HepG2 (cell line): ENCODE measurements at regions of chr20 and their contacts with region 1.

Region 1: DNA sequence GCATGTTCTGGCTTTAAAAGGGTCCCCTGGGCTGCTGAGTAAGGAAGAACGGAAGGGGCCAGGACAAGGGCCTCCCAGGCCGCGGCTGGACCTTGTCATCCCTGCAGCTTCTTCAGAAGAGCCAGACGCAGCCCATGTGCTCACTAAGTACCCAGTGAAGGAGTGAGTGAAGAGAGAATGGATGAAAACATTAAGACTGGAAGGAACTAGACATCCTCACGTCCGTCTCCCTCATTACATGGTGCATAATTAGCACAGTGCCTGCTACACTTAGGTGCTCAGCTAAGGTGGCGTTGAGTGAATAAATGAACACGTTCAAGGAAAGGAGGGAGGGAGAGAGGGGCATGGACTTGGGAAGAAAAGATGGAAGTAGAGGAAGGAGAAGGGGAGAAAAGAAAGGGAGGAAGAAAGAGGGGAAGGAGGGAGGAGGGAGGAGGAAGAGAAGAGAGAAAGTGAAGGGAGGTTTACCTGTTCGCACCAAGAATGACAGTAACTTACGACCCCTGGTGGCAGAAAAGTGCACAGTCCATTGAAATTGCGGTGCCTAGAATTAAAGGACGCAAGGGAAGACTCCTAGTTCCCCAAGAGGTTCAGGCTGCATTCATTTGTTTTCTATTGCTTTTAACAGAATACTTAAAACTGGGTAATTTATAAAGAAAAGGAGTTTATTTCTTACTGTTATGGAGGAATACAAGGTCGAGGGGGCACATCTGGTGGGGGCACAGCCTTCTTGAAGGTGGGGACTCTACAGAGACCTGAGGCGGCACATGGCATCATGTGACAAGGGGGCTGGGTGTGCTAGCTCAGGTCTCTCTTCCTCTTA is 8.0 kb downstream of the TP53RK start:
- DNase-seq: peak; percentile 82
- ATAC-seq: peak; percentile 59
- H3K4me3 ChIP-seq: no peak overlapping the region
- H3K27ac ChIP-seq: no peak overlapping the region
- H3K4me1 ChIP-seq: peaks cover 88% of the 10 kb centered on the region
- H3K27me3 ChIP-seq: no peaks in the 10 kb centered on the region
- CTCF ChIP-seq: peak; percentile 97
- EP300 ChIP-seq: no peak
- POLR2A ChIP-seq: no peak
- RAD21 ChIP-seq: peak; percentile 98

Region 2: DNA sequence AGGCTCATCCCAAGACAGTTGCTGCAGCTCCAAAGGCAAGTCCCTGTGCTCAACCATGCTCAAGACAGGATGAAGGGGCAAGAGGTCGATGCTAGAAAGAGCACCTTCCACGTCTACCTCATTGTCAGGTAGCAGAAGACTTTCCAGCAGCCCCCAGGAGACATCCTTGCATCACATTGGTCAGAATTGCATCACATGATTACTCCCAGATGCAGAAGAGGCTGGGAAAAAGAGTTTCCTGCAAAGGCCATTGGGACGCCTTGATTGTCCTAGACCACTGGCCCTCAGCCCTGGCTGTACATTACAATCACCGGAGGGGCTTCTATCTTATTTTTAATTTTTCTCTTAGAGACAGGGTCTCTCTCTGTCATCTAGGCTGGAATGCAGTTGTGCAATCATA is 150.6 kb before region 1 on chr20:
- CTCF ChIA-PET with region 1: no interaction called
- POLR2A ChIA-PET with region 1: no interaction called
- in situ Hi-C with region 1: no loop called
- intact Hi-C with region 1: no loop called
- DNase-seq: no peak
- ATAC-seq: no peak
- H3K4me3 ChIP-seq: no peak overlapping the region
- H3K27ac ChIP-seq: no peak overlapping the region
- H3K4me1 ChIP-seq: peaks cover 10% of the 10 kb centered on the region; the same call in 1 of the 2 replicates
- H3K27me3 ChIP-seq: peaks cover 2% of the 10 kb centered on the region in 2 experiments; a peak in 2 of 5 replicates
- CTCF ChIP-seq: no peak
- EP300 ChIP-seq: no peak
- POLR2A ChIP-seq: no peak
- RAD21 ChIP-seq: no peak

Region 3: GRCh38 chr20:46545077-46545826 is 136.0 kb before region 1 on chr20:
- CTCF ChIA-PET with region 1: interaction called, 14 read pairs
- POLR2A ChIA-PET with region 1: no interaction called
- in situ Hi-C with region 1: no loop called
- intact Hi-C with region 1: no loop called
- DNase-seq: no peak
- ATAC-seq: peak; percentile 58
- H3K4me3 ChIP-seq: no peak overlapping the region
- H3K27ac ChIP-seq: no peak overlapping the region
- H3K4me1 ChIP-seq: peaks cover 31% of the 10 kb centered on the region
- H3K27me3 ChIP-seq: peaks cover 3 to 16% of the 10 kb centered on the region in 2 experiments; a peak in 3 of 5 replicates
- CTCF ChIP-seq: peak; percentile 29
- EP300 ChIP-seq: no peak
- POLR2A ChIP-seq: no peak
- RAD21 ChIP-seq: no peak

Region 4: DNA sequence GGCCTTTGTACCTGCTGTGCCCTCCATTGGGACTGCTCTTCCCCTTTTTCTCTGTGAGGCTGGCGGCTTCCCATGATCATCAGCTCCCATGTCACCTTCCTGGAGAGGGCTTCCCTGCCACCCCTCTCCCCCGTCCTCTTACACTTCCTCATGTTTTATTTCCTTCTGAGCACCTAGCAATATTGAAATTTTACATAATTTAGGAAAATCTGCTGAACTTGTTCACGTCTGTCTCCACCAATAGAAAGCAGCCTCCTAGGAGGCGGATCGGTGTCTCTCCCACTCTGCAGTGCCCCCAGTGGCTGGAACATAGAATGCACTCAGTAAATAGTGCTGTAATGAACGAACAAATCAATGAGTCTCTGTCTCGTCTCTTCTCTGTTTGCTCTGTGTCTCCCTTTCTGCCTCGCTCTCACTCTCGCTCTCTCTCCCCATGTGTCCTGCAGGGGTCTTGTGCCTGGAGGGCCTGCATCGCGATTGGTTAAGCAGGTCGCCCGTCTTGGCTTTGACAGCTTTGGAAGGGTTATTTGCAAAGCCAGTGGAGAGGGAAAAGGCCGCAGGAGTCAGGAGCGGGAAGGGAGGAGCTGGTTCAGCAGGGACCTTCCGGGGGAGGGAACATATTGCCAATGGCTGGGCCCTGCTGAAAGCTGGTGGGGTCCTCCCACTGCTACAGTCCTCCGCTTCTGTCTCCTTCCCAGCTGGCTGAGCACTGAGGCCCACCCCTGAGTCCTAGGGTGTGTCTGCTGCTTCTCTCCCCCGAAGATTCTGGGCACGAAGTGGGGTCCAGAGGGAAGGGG is 118.7 kb before region 1 on chr20:
- CTCF ChIA-PET with region 1: interaction called, 19 read pairs
- POLR2A ChIA-PET with region 1: interaction called, 4 read pairs
- in situ Hi-C with region 1: loop called (anchors 5 kb)
- intact Hi-C with region 1: loop called (anchors 1 kb)
- DNase-seq: peak; percentile 87
- ATAC-seq: peak; percentile 74
- H3K4me3 ChIP-seq: peak overlapping the region; percentile 24 to 58 (median 29); a peak in 5 of 6 replicates
- H3K27ac ChIP-seq: peak overlapping the region; percentile 55
- H3K4me1 ChIP-seq: peaks cover 72% of the 10 kb centered on the region
- H3K27me3 ChIP-seq: no peaks in the 10 kb centered on the region
- CTCF ChIP-seq: peak; percentile 93
- EP300 ChIP-seq: peak; percentile 41 to 46; a peak in 2 of 4 replicates
- POLR2A ChIP-seq: no peak; a peak in 1 of 4 replicates
- RAD21 ChIP-seq: peak; percentile 65; the same call in 1 of the 2 replicates

Region 5: DNA sequence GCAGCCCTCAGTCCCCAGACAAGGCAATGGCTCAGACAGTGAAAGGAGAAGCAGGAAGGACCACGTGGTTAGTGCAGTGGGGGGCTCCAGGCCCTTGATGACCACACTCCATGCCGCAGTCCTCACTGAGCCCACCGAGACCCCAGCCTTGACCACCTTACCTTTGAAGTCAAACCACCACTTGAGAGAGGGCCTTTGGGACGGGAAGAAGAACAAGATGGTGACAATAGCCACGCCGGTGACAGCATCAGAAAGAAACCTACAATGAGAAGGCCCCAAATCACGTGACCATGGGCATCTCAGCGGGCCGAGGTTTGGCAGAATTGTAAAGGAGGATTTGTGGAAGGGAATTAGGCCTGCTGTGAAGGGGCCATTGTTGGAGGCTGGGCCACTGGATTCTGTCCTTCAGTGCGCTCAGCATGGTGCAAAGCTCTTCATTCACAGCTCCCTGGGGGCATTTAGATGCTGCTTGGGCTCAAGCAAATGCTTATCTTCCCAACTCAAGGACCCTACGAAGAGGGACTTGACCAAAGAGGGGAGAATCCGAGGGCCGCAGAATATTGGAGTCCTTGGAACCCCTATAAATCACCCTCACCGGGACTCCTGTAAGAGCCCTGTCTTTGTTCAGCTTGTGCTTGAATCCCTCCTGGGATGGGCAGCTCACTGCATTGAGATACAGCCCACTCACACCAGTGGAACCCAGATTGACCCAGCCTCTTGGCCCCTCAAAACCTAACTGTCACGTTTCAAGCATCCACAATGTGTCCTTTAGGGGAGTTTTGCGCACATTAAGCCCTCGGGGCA is 97.6 kb before region 1 on chr20:
- CTCF ChIA-PET with region 1: interaction called, 11 read pairs
- POLR2A ChIA-PET with region 1: no interaction called
- in situ Hi-C with region 1: no loop called
- intact Hi-C with region 1: no loop called
- DNase-seq: no peak
- ATAC-seq: no peak
- H3K4me3 ChIP-seq: no peak overlapping the region
- H3K27ac ChIP-seq: peak overlapping the region; percentile 16
- H3K4me1 ChIP-seq: peaks cover 39% of the 10 kb centered on the region
- H3K27me3 ChIP-seq: no peaks in the 10 kb centered on the region
- CTCF ChIP-seq: no peak
- EP300 ChIP-seq: no peak
- POLR2A ChIP-seq: no peak
- RAD21 ChIP-seq: no peak